Motor neuron (in vitro differentiated cells): ENCODE measurements at regions of chr10 and their contacts with region 1.

Region 1: DNA sequence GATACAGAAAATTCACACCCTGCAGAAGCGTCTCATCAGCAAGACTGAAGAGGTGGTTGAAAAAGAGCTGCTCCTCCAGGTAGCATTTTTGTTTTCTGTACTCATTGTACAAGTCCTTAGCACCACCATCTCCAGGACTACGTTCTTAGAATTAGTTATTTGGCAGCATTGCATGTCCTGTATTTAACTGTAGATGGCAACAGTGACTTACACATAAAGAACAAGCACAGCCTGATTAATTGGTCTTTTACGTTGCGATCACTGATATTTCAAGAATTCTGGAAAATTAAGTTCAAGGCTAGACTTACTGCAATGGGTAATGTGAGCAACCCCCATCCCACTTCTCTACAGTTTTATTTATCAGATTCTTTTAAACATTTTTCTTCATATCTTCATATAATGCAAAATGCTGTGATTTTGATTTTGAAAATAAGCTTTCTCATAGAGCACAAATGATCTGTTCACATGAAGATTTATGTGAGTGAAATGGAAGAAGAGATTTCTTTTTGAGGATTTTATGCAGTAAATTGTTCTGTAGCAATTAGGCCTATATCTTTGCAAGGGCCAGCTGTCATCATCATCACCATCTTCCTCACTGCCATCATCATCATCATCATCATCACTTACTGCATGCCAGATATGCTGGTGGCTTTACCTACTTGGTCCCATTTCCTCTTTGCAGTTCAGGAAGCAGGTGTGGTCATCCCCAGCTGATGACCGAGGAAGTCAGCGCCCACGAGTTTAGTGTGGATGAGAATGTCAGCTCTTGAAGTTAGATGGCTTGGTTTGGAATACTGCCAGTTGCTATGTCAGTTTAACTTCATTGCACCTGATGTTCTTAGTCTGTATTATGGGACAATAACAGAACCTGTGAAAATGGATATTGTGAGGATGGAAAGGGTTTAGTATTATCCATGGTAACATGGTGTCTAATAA is 53.4 kb downstream of the CFAP58 start:
- ATAC-seq: peak; percentile 26 to 83 (median 60)
- H3K4me3 ChIP-seq: no peak overlapping the region
- H3K27ac ChIP-seq: no peak overlapping the region
- H3K4me1 ChIP-seq: peaks cover 0 to 7% of the 10 kb centered on the region in 2 donors

Region 2: GRCh38 chr10:103712570-103713498 is 694.1 kb before region 1 on chr10:
- in situ Hi-C with region 1: no loop called
- ATAC-seq: peak; percentile 75 to 94 (median 81)
- H3K4me3 ChIP-seq: no peak overlapping the region
- H3K27ac ChIP-seq: no peak overlapping the region
- H3K4me1 ChIP-seq: no peaks in the 10 kb centered on the region

Region 3: GRCh38 chr10:104559935-104560334 is 153.0 kb after region 1 on chr10:
- in situ Hi-C with region 1: loop called in 1 of 9 experiments (anchors 25 kb)
- ATAC-seq: peak in 7 of 8 experiments; percentile 51 to 86 (median 70)
- H3K4me3 ChIP-seq: no peak overlapping the region
- H3K27ac ChIP-seq: no peak overlapping the region
- H3K4me1 ChIP-seq: no peaks in the 10 kb centered on the region

Region 4: GRCh38 chr10:104614245-104614831 is 207.4 kb after region 1 on chr10:
- in situ Hi-C with region 1: loop called in 2 of 9 experiments (anchors 10 to 25 kb)
- ATAC-seq: peak in 3 of 8 experiments; percentile 57 to 76 (median 69)
- H3K4me3 ChIP-seq: no peak overlapping the region
- H3K27ac ChIP-seq: no peak overlapping the region
- H3K4me1 ChIP-seq: peaks cover 0 to 4% of the 10 kb centered on the region in 2 donors

Region 5: DNA sequence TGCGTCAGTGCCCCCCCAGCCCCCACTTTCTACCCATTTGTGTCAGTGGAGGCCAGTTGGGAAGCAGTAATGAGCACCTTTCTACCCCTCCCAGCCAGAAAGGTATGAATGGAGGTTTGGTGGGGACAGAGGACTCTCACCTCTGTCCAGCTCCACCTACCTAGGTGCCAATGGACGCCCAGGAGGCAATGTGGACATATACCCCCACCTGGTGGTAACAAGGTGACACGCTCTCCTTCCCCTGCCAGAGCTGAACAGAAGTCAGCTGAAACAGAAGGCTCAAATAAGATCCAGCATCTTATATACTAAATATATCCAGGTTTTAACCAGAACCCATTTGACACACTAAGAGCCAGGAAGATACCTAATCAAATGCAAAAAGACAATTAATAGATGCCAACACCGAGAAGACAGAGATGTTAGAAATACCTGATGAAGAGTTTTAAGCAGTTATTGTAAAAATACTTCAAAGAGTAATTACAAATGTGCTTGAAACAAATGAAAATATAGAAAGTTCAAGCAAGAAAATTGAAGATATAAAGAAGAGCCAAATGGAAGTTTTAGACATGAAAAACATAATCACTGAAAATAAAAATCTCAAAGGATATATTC is 215.7 kb after region 1 on chr10:
- in situ Hi-C with region 1: loop called in 3 of 9 experiments (anchors 10 to 25 kb)
- ATAC-seq: peak in 3 of 8 experiments; percentile 55 to 89 (median 65)
- H3K4me3 ChIP-seq: no peak overlapping the region
- H3K27ac ChIP-seq: no peak overlapping the region
- H3K4me1 ChIP-seq: no peaks in the 10 kb centered on the region